Activated CD8-positive, alpha-beta T cell treated with anti-CD3 and anti-CD28 coated beads for 36 hours (primary cell): ENCODE measurements at regions of chr1 and their contacts with region 1.

Region 1: GRCh38 chr1:210143465-210144062 is 89.0 kb upstream of the SERTAD4 start:
- DNase-seq: peak; percentile 86
- ATAC-seq: no peak
- H3K4me3 Mint-ChIP-seq: no peak overlapping the region
- H3K27ac Mint-ChIP-seq: no peak overlapping the region
- H3K4me1 Mint-ChIP-seq: no peaks in the 10 kb centered on the region
- H3K27me3 Mint-ChIP-seq: peaks cover 17% of the 10 kb centered on the region
- CTCF ChIP-seq: peak; percentile 70

Region 2: DNA sequence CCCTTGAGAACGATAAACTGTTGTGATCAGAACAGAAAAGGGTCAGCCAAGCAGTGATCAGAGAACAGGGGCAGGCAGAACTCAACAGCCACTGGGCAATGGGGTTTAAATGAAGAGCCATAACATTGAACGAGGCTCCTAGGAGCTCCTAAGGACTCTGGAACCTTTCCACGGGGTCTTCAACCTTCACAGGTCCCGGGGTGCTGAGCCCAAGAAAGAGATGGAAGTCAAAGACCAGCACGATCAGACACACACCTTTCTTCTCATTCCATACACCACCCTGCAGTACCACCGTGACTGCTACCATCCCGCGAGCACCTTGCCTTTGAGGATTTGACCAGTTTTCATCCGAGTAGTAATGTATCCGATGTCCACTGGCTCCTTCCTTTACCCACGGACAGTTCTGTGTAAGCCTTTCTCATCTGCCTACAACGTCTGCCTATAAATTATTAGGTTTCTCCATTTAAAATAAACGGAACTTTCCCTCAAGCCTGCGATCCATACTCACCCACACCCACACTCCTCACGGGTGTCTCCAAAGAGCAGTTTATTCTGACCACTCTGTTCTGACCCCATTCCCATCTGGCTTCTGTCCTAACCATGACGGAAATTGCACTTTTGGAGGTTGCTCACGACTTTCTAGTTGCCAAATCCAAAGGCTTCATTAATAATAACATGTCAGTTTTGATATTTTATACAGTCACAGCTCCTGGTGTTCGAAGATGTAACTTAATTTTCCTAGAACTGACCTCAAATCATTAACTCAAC is 168.3 kb after region 1 on chr1:
- CTCF ChIA-PET with region 1: interaction called, 21 read pairs
- POLR2A ChIA-PET with region 1: no interaction called
- intact Hi-C with region 1: loop called (anchors 1 kb)
- DNase-seq: no peak
- ATAC-seq: no peak
- H3K4me3 Mint-ChIP-seq: peak overlapping the region; percentile 73
- H3K27ac Mint-ChIP-seq: no peak overlapping the region
- H3K4me1 Mint-ChIP-seq: peaks cover 4% of the 10 kb centered on the region
- H3K27me3 Mint-ChIP-seq: peaks cover 11% of the 10 kb centered on the region
- CTCF ChIP-seq: no peak

Region 3: GRCh38 chr1:210400043-210400840 is 256.7 kb after region 1 on chr1:
- CTCF ChIA-PET with region 1: interaction called, 7 read pairs
- POLR2A ChIA-PET with region 1: no interaction called
- intact Hi-C with region 1: loop called (anchors 2 kb)
- DNase-seq: peak; percentile 85
- ATAC-seq: peak; percentile 77
- H3K4me3 Mint-ChIP-seq: peak overlapping the region; percentile 38
- H3K27ac Mint-ChIP-seq: peak overlapping the region; percentile 91
- H3K4me1 Mint-ChIP-seq: peaks cover 42% of the 10 kb centered on the region
- H3K27me3 Mint-ChIP-seq: peaks cover 2% of the 10 kb centered on the region
- CTCF ChIP-seq: peak; percentile 78